ENCODE measurements at regions of chr20 and their contacts with region 1.

Region 1: GRCh38 chr20:37527638-37528441 is at the start of gene BLCAP:
- DNase-seq: peak; percentile 97 to 99
- H3K4me3 ChIP-seq: peak within 1 kb of the TSS; percentile 92
- H3K4me3 Mint-ChIP-seq: peak within 1 kb of the TSS; percentile 79
- H3K27ac Mint-ChIP-seq: peak within 1 kb of the TSS; percentile 98
- H3K4me1 ChIP-seq: peaks cover 36% of the 10 kb centered on the region
- H3K4me1 Mint-ChIP-seq: peaks cover 47% of the 10 kb centered on the region
- H3K27me3 ChIP-seq: no peaks in the 10 kb centered on the region
- H3K27me3 Mint-ChIP-seq: no peaks in the 10 kb centered on the region
- CTCF ChIP-seq: no peak
- total RNA-seq, gene BLCAP: 123 and 129 TPM in 2 replicates

Region 2: GRCh38 chr20:37457921-37458320 is 69.9 kb before region 1 on chr20:
- CTCF ChIA-PET with region 1: no interaction called
- POLR2A ChIA-PET with region 1: no interaction called
- intact Hi-C with region 1: no loop called
- DNase-seq: no peak
- H3K4me3 ChIP-seq: no peak overlapping the region
- H3K4me3 Mint-ChIP-seq: no peak overlapping the region
- H3K27ac Mint-ChIP-seq: no peak overlapping the region
- H3K4me1 ChIP-seq: no peaks in the 10 kb centered on the region
- H3K4me1 Mint-ChIP-seq: no peaks in the 10 kb centered on the region
- H3K27me3 ChIP-seq: no peaks in the 10 kb centered on the region
- H3K27me3 Mint-ChIP-seq: peaks cover 20% of the 10 kb centered on the region
- CTCF ChIP-seq: no peak

Region 3: DNA sequence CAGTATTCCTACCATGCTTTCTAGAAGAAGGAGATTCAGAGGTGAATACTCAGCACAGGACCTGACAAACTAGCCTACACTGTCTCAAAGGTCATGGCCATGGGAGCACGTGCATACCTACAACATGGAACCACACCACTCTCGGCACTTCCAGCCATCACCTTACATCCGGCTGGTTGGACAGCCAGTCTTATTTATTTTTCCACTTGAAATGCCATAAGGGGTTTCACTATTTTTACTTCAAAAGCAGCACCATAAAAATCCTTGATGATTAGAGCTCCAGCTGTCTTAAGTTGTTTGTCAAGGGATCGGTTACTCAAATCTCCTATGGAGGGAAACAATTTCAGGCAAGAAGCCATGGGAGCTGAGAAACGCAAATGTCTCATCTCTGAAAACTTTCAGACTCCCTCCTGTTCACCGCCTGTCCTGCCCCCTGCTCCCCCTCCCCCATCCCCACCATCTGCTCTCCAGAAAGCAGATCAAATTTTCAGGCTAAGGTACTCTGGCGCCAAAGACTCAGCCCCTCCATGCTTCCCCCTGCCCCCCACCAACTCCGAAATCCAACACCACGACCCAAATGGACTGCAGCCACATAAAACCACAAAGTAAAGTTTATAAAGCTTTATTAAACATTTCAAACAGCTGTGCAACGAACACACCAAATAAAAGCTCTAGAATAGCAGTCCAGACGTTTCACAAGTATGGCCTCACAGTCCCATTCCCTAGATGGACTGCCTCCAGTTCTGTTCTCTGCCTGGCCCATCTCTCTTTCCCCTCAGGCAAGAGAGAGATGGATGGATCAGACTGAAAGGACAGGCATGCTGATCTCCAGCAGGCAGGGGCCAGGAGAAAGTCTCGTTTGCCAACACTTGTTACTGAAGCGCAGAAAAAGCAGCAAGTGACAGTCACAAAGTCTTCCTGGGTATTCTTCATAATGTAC is 10.8 kb before region 1 on chr20:
- CTCF ChIA-PET with region 1: no interaction called
- POLR2A ChIA-PET with region 1: no interaction called
- intact Hi-C with region 1: loop called (anchors 1 kb)
- DNase-seq: peak in 1 of 2 experiments; percentile 41
- H3K4me3 ChIP-seq: no peak overlapping the region
- H3K4me3 Mint-ChIP-seq: no peak overlapping the region
- H3K27ac Mint-ChIP-seq: no peak overlapping the region
- H3K4me1 ChIP-seq: no peaks in the 10 kb centered on the region
- H3K4me1 Mint-ChIP-seq: peaks cover 12% of the 10 kb centered on the region
- H3K27me3 ChIP-seq: no peaks in the 10 kb centered on the region
- H3K27me3 Mint-ChIP-seq: no peaks in the 10 kb centered on the region
- CTCF ChIP-seq: no peak

Region 4: GRCh38 chr20:37542281-37542680 is 14.4 kb after region 1 on chr20:
- CTCF ChIA-PET with region 1: no interaction called
- POLR2A ChIA-PET with region 1: interaction called, 7 read pairs
- intact Hi-C with region 1: loop called (anchors 1 kb)
- DNase-seq: peak; percentile 91 to 94
- H3K4me3 ChIP-seq: no peak overlapping the region
- H3K4me3 Mint-ChIP-seq: peak overlapping the region; percentile 46
- H3K27ac Mint-ChIP-seq: peak overlapping the region; percentile 93
- H3K4me1 ChIP-seq: peaks cover 54% of the 10 kb centered on the region
- H3K4me1 Mint-ChIP-seq: peaks cover 57% of the 10 kb centered on the region
- H3K27me3 ChIP-seq: no peaks in the 10 kb centered on the region
- H3K27me3 Mint-ChIP-seq: no peaks in the 10 kb centered on the region
- CTCF ChIP-seq: no peak